Activated naive CD4-positive, alpha-beta T cell treated with anti-CD3 and anti-CD28 coated beads for 36 hours (primary cell): ENCODE measurements at regions of chr22 and their contacts with region 1.

Region 1: GRCh38 chr22:42895087-42895486 is 38.0 kb upstream of the ARFGAP3 start:
- DNase-seq: peak; percentile 57
- H3K4me3 Mint-ChIP-seq: peak overlapping the region; percentile 35
- H3K27ac Mint-ChIP-seq: peak overlapping the region; percentile 74
- H3K4me1 Mint-ChIP-seq: peaks cover 38% of the 10 kb centered on the region
- H3K27me3 Mint-ChIP-seq: no peaks in the 10 kb centered on the region

Region 2: GRCh38 chr22:42587588-42588175 is 307.4 kb before region 1 on chr22:
- CTCF ChIA-PET with region 1: no interaction called
- intact Hi-C with region 1: no loop called
- DNase-seq: no peak
- H3K4me3 Mint-ChIP-seq: no peak overlapping the region
- H3K27ac Mint-ChIP-seq: no peak overlapping the region
- H3K4me1 Mint-ChIP-seq: no peaks in the 10 kb centered on the region
- H3K27me3 Mint-ChIP-seq: no peaks in the 10 kb centered on the region

Region 3: GRCh38 chr22:42933481-42934091 is 38.5 kb after region 1 on chr22:
- CTCF ChIA-PET with region 1: no interaction called
- intact Hi-C with region 1: loop called (anchors 5 kb)
- DNase-seq: no peak
- H3K4me3 Mint-ChIP-seq: no peak overlapping the region
- H3K27ac Mint-ChIP-seq: peak overlapping the region; percentile 28
- H3K4me1 Mint-ChIP-seq: peaks cover 68% of the 10 kb centered on the region
- H3K27me3 Mint-ChIP-seq: no peaks in the 10 kb centered on the region

Region 4: GRCh38 chr22:42944409-42944808 is 49.3 kb after region 1 on chr22:
- CTCF ChIA-PET with region 1: no interaction called
- intact Hi-C with region 1: no loop called
- DNase-seq: no peak
- H3K4me3 Mint-ChIP-seq: no peak overlapping the region
- H3K27ac Mint-ChIP-seq: no peak overlapping the region
- H3K4me1 Mint-ChIP-seq: peaks cover 53% of the 10 kb centered on the region
- H3K27me3 Mint-ChIP-seq: no peaks in the 10 kb centered on the region

Region 5: GRCh38 chr22:42959576-42960509 is 64.8 kb after region 1 on chr22:
- CTCF ChIA-PET with region 1: interaction called, 4 read pairs
- intact Hi-C with region 1: loop called (anchors 10 kb)
- DNase-seq: peak; percentile 36
- H3K4me3 Mint-ChIP-seq: peak overlapping the region; percentile 64
- H3K27ac Mint-ChIP-seq: peak overlapping the region; percentile 26
- H3K4me1 Mint-ChIP-seq: peaks cover 68% of the 10 kb centered on the region
- H3K27me3 Mint-ChIP-seq: no peaks in the 10 kb centered on the region

Region 6: GRCh38 chr22:43467216-43467940 is 572.3 kb after region 1 on chr22:
- CTCF ChIA-PET with region 1: no interaction called
- intact Hi-C with region 1: no loop called
- DNase-seq: no peak
- H3K4me3 Mint-ChIP-seq: no peak overlapping the region
- H3K27ac Mint-ChIP-seq: no peak overlapping the region
- H3K4me1 Mint-ChIP-seq: no peaks in the 10 kb centered on the region
- H3K27me3 Mint-ChIP-seq: peaks cover 34% of the 10 kb centered on the region